Left cardiac atrium (tissue), 4 donors: ENCODE measurements at regions of chr7 and their contacts with region 1.

Region 1: GRCh38 chr7:1555809-1556540 is at the start of gene TMEM184A:
- DNase-seq: no peak
- ATAC-seq: peak in 1 of 2 donors; percentile 23
- total RNA-seq, gene TMEM184A: 0.18 to 0.31 TPM

Region 2: GRCh38 chr7:1503816-1504775 is 51.9 kb before region 1 on chr7 and contains the start of gene INTS1:
- intact Hi-C with region 1: loop called (anchors 5 to 10 kb)
- DNase-seq: peak; percentile 93
- ATAC-seq: peak; percentile 92 to 94
- total RNA-seq, gene INTS1: 26.9 to 42.4 TPM